Mammary epithelial cell (primary cell): ENCODE measurements at regions of chr3 and their contacts with region 1.

Region 1: DNA sequence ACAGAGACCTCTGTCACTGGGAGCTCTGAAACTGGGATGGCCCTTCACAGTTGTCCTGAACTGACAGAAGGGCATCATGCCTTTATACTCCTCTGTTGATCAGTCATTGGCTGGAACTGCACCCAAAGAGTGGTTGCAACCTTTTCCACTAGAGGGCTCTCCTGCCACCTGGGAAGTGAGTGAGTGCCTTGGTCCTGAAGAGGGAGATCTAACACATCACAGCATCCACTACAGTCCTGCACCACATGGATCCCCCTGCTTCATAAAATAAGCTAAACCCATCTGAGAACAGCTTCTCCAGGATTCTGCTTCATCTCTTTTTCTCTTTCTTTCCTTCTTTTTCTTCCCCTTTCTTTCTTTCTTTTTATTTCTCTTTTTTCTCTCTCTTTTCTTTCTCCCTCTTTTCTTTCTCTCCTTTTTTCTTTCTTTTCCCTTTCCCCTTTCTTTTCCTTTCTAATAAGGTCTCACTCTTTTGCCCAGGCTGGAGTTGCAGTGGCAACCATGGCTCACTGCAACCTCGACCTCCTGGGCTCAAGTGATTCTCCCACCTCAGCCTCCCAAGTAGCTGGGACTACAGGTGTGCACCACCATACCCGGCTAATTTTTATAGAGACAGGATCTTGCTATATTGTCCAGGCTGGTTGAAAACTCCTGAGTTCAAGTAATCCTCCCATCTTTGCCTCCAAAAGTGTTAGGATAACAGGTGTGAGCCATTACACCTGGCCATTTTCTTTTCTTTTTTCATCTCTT is 42.8 kb upstream of the RAF1 start:
- DNase-seq: peak; percentile 77
- H3K4me3 ChIP-seq: no peak overlapping the region
- H3K27ac ChIP-seq: no peak overlapping the region
- H3K4me1 ChIP-seq: peaks cover 32% of the 10 kb centered on the region
- H3K27me3 ChIP-seq: no peaks in the 10 kb centered on the region
- CTCF ChIP-seq: peak; percentile 92 to 96

Region 2: GRCh38 chr3:12462159-12462947 is 244.3 kb before region 1 on chr3:
- CTCF ChIA-PET with region 1: no interaction called
- dilution Hi-C with region 1: no loop called
- in situ Hi-C with region 1: no loop called
- intact Hi-C with region 1: no loop called
- DNase-seq: no peak
- H3K4me3 ChIP-seq: no peak overlapping the region
- H3K27ac ChIP-seq: no peak overlapping the region
- H3K4me1 ChIP-seq: peaks cover 7% of the 10 kb centered on the region
- H3K27me3 ChIP-seq: no peaks in the 10 kb centered on the region
- CTCF ChIP-seq: no peak

Region 3: GRCh38 chr3:12601072-12601471 is 105.6 kb before region 1 on chr3:
- CTCF ChIA-PET with region 1: no interaction called
- dilution Hi-C with region 1: no loop called
- in situ Hi-C with region 1: no loop called
- intact Hi-C with region 1: loop called (anchors 10 kb)
- DNase-seq: no peak
- H3K4me3 ChIP-seq: no peak overlapping the region
- H3K27ac ChIP-seq: no peak overlapping the region
- H3K4me1 ChIP-seq: no peaks in the 10 kb centered on the region
- H3K27me3 ChIP-seq: no peaks in the 10 kb centered on the region
- CTCF ChIP-seq: peak in 1 of 2 donors; percentile 17

Region 4: GRCh38 chr3:12677580-12677979 is 29.1 kb before region 1 on chr3:
- CTCF ChIA-PET with region 1: no interaction called
- dilution Hi-C with region 1: no loop called
- in situ Hi-C with region 1: no loop called
- intact Hi-C with region 1: no loop called
- DNase-seq: no peak
- H3K4me3 ChIP-seq: no peak overlapping the region
- H3K27ac ChIP-seq: no peak overlapping the region
- H3K4me1 ChIP-seq: peaks cover 23% of the 10 kb centered on the region
- H3K27me3 ChIP-seq: no peaks in the 10 kb centered on the region
- CTCF ChIP-seq: no peak

Region 5: GRCh38 chr3:12687962-12688361 is 18.7 kb before region 1 on chr3:
- CTCF ChIA-PET with region 1: no interaction called
- dilution Hi-C with region 1: no loop called
- in situ Hi-C with region 1: no loop called
- intact Hi-C with region 1: no loop called
- DNase-seq: no peak
- H3K4me3 ChIP-seq: no peak overlapping the region
- H3K27ac ChIP-seq: no peak overlapping the region
- H3K4me1 ChIP-seq: no peaks in the 10 kb centered on the region
- H3K27me3 ChIP-seq: no peaks in the 10 kb centered on the region
- CTCF ChIP-seq: no peak

Region 6: DNA sequence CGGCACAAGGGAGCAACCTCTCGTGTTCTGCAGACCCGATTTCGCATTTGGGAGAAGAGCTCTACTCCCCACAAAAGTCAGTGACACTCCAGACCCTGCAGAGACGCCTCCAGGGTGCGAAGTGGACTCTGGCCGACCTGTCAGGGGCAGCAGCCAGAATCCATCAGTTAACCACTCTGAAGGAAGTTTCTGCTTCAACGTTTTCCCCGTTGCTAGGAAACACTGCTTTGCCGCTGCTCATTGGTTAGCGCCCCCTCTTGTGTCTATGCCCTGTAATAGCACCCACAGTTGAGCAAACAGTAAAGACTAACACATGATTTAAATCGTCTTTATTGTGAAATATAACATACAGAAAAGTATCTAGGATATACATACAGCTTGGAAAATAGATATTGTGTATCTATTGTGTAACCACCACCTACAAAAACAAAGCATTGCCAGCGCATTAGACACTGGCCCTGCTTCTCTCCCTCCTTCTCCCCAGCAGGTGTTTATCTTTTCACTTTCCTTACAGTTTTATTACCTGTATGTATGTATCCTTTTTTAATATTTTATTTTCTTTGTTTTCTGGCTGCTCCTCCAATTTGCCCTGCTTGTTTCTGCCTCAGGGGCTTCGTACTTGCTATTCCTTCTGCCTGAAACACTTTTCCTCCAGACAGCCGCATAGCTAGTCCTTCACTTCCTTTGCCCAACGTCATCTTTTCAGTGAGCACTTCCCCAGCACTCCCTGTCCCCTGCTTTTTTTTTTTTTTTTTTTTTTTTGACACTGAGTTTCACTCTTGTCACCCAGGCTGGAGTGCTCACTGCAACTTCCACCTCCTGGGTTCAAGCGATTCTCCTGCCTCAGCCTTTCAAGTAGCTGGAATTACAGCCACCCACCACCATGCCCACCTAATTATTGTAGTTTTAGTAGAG is 13.6 kb after region 1 on chr3:
- CTCF ChIA-PET with region 1: interaction called, 6 read pairs
- dilution Hi-C with region 1: no loop called
- in situ Hi-C with region 1: no loop called
- intact Hi-C with region 1: loop called (anchors 1 kb)
- DNase-seq: peak; percentile 72
- H3K4me3 ChIP-seq: peak overlapping the region; percentile 17 to 24 (median 24)
- H3K27ac ChIP-seq: no peak overlapping the region
- H3K4me1 ChIP-seq: peaks cover 4% of the 10 kb centered on the region
- H3K27me3 ChIP-seq: no peaks in the 10 kb centered on the region
- CTCF ChIP-seq: peak; percentile 97 to 98

Region 7: DNA sequence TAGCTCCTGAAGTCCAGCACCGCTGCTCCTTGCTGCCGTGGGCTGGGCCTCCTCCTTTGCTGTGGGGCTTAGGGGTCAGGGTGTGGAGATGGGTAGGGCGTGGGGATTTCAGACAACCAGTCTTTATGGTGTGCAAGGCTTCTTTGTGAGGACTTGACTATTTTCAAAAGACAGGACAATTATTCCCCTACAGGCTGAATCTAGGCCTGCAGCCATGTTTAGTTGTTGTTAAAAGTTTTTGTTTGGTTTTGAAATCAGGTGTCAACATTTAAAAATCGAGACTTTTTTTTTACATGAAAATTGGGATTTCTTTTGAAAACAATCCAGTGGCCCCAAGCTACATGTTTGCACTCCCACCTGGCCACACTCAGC is 124.1 kb after region 1 on chr3:
- CTCF ChIA-PET with region 1: interaction called, 3 read pairs
- dilution Hi-C with region 1: no loop called
- in situ Hi-C with region 1: no loop called
- intact Hi-C with region 1: loop called (anchors 1 kb)
- DNase-seq: no peak
- H3K4me3 ChIP-seq: no peak overlapping the region
- H3K27ac ChIP-seq: no peak overlapping the region
- H3K4me1 ChIP-seq: peaks cover 3% of the 10 kb centered on the region
- H3K27me3 ChIP-seq: no peaks in the 10 kb centered on the region
- CTCF ChIP-seq: peak; percentile 19 to 31

Region 8: DNA sequence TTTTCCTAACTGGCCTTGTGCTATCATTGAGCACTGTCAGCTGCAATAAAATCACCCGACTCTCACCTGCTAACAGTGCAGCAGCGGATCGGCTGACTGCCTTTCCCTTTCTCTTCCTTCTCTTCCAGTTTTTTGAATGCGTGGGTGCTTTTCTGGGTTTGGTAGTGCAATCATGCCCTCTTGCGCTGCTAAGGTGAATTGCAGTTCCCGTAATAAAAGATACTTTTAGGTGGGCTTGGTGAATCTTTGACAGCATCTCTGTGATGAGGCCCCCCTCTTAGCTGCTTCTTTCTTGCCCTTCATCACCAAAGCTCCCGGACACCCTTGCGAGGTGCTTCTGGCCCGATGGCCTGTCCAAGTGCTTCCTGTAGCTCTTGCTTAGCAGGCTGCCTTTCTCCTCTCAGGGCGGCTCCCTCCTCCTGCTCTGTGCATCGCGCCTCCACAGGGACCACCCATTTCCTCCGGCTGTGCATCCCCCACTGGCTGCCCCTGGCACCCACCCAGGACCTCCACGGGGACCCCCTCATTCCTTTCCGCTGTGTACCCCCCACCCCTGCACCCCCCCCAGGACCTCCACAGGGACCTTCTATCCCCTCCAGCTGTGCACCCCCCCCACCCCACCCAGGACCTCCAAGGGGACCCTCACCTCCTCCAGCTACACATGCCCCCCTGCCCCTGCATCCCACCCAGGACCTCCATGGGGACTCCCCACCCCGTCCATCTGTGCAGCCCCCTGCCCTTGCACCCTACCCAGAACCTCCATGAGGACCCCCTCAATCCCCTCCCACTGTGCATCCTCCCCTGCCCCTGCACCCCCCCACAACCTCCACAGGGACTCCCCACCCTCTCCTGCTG is 185.5 kb after region 1 on chr3:
- CTCF ChIA-PET with region 1: no interaction called
- dilution Hi-C with region 1: no loop called
- in situ Hi-C with region 1: loop called in 1 of 2 experiments (anchors 10 kb)
- intact Hi-C with region 1: loop called (anchors 1 kb)
- DNase-seq: peak; percentile 45
- H3K4me3 ChIP-seq: peak overlapping the region in 1 of 3 experiments; percentile 10
- H3K27ac ChIP-seq: no peak overlapping the region
- H3K4me1 ChIP-seq: peaks cover 3% of the 10 kb centered on the region
- H3K27me3 ChIP-seq: no peaks in the 10 kb centered on the region
- CTCF ChIP-seq: peak; percentile 88 to 94